K562 (cell line): ENCODE measurements at regions of chr9 and their contacts with region 1.

Region 1: DNA sequence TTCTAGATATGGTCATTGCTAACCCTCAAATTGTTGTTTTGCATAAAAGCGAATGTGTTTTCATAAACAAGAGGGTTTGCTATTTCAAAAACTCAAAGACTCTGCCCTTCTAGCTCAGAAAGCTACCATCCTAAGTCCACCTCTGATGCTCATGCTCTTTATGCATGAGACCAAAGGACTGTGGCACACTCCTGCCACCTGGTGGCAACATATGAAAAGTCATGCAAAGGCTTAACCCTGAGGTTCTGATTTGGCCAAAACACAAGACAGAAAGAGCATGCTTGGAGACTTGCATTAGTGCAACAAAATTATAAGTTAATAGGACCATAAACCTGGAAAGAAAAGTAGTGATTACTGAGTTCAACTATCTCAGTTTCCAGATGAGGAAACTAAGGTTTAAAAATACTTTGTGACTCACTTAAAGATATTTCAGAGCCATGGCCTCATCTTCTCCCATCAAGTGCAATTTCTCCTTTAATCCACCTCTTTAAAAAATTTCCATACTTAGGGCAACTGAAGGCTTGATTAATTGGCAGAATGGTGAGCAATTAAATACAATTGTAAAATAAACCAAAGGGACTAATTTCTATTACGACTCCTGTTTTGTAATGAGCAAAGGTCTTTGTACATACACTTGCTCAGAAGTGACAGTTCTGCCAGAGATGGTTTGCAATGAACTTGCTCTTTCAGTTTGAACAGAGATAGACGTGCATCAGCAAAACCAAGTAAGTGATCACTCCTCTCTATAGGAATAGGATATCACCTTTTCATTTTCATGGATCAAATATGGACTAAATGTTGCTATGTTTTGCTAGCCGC is 110.7 kb upstream of the RAD23B start:
- DNase-seq: peak; percentile 43 to 79 (median 70)
- ATAC-seq: peak; percentile 95
- H3K4me3 ChIP-seq: no peak overlapping the region
- H3K27ac ChIP-seq: no peak overlapping the region
- H3K4me1 ChIP-seq: no peaks in the 10 kb centered on the region
- H3K27me3 ChIP-seq: peaks cover 0 to 11% of the 10 kb centered on the region in 2 experiments; a peak in 2 of 5 replicates
- CTCF ChIP-seq: peak; percentile 73 to 84 (median 76)
- EP300 ChIP-seq: no peak
- POLR2A ChIP-seq: no peak
- RAD21 ChIP-seq: peak; percentile 82 to 85

Region 2: DNA sequence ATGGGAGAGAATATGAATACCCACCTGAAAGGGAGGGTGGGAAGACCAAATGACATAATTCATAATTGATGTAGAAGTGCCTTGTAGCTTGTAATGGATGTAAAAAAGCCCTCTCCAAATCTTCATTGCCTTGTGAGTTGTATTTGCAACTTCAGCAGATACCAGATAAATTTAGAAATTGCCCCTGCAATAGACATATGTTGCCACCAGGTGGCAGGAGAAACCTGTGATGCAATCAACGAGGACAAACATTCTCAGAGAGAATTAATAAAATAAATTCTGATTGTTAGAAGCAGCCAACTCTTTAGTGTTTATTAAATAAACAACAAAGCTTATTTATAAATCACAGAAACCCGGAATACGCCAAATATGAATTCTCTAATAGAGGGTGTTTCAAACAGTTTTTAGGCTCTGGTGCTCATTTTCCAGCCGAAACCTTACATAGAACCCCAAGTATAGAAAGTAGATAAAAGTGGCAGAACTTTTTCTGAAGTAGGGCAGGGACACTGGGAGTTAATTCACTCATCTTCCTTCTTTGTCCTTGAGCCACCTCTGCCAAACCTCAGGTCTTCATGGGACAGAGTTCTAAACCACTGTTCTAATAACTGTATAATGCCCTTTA is 1330.2 kb before region 1 on chr9:
- CTCF ChIA-PET with region 1: interaction called, 5 read pairs
- POLR2A ChIA-PET with region 1: no interaction called
- in situ Hi-C with region 1: no loop called
- intact Hi-C with region 1: loop called (anchors 1 kb)
- DNase-seq: peak; percentile 51 to 55 (median 51)
- ATAC-seq: peak; percentile 58; the same call in 1 of the 3 replicates
- H3K4me3 ChIP-seq: no peak overlapping the region
- H3K27ac ChIP-seq: no peak overlapping the region
- H3K4me1 ChIP-seq: no peaks in the 10 kb centered on the region
- H3K27me3 ChIP-seq: no peaks in the 10 kb centered on the region
- CTCF ChIP-seq: peak; percentile 69 to 90 (median 77)
- EP300 ChIP-seq: no peak
- POLR2A ChIP-seq: no peak
- RAD21 ChIP-seq: peak; percentile 95 to 96

Region 3: GRCh38 chr9:105881654-105882349 is 1290.6 kb before region 1 on chr9:
- CTCF ChIA-PET with region 1: no interaction called
- POLR2A ChIA-PET with region 1: no interaction called
- in situ Hi-C with region 1: loop called (anchors 25 kb)
- intact Hi-C with region 1: no loop called
- DNase-seq: peak; percentile 58 to 81 (median 62)
- ATAC-seq: peak; percentile 90
- H3K4me3 ChIP-seq: no peak overlapping the region
- H3K27ac ChIP-seq: no peak overlapping the region
- H3K4me1 ChIP-seq: peaks cover 0 to 14% of the 10 kb centered on the region in 2 experiments; a peak in 4 of 5 replicates
- H3K27me3 ChIP-seq: no peaks in the 10 kb centered on the region
- CTCF ChIP-seq: peak; percentile 78 to 93 (median 89)
- EP300 ChIP-seq: no peak
- POLR2A ChIP-seq: no peak
- RAD21 ChIP-seq: peak; percentile 80 to 92

Region 4: DNA sequence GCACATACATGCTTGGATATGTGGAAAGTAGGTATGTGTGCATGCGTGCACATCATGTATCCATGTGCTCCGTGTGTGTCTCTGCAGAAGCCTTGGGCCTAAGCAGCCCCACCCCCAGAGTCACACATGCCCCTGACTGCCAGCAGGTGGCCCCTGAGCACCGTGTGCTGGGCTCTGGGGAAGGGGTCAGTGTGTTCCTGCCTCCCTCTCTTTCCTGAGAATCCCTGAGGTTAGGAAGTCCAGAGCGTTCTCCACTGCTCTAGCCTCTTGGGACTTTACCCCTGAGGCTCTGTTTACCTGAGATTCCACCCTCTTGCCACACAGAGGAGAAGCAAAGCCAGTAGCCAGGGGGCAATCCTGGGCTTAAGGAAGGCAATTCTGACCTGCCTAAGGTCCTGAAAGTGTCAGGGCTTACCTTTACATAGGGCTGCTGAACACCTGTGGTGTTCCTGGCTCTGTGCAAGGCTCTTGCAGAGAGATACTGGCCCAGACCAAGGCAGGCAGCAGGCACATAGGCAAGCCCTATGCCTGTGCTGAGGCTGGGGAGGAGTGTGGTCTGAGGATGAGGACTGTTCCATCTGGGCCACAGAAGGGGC is 1270.8 kb before region 1 on chr9:
- CTCF ChIA-PET with region 1: no interaction called
- POLR2A ChIA-PET with region 1: no interaction called
- in situ Hi-C with region 1: loop called (anchors 25 kb)
- intact Hi-C with region 1: loop called (anchors 1 kb)
- DNase-seq: peak; percentile 40 to 66 (median 63)
- ATAC-seq: peak; percentile 99
- H3K4me3 ChIP-seq: no peak overlapping the region
- H3K27ac ChIP-seq: no peak overlapping the region
- H3K4me1 ChIP-seq: no peaks in the 10 kb centered on the region
- H3K27me3 ChIP-seq: no peaks in the 10 kb centered on the region
- CTCF ChIP-seq: peak; percentile 61 to 78 (median 74)
- EP300 ChIP-seq: no peak
- POLR2A ChIP-seq: no peak
- RAD21 ChIP-seq: peak; percentile 45 to 76; a peak in 3 of 4 replicates

Region 5: GRCh38 chr9:107127602-107128001 is 44.8 kb before region 1 on chr9:
- CTCF ChIA-PET with region 1: no interaction called
- POLR2A ChIA-PET with region 1: no interaction called
- in situ Hi-C with region 1: no loop called
- intact Hi-C with region 1: no loop called
- DNase-seq: no peak
- ATAC-seq: peak; percentile 57; the same call in 2 of the 3 replicates
- H3K4me3 ChIP-seq: no peak overlapping the region
- H3K27ac ChIP-seq: no peak overlapping the region
- H3K4me1 ChIP-seq: no peaks in the 10 kb centered on the region
- H3K27me3 ChIP-seq: peaks cover 0 to 14% of the 10 kb centered on the region in 2 experiments; a peak in 3 of 5 replicates
- CTCF ChIP-seq: 0 out of 6 replicates have a peak, but pooled peaks of 1 of the 3 experiments have one; percentile 13
- EP300 ChIP-seq: no peak
- POLR2A ChIP-seq: no peak
- RAD21 ChIP-seq: no peak; a peak in 1 of 4 replicates

Region 6: DNA sequence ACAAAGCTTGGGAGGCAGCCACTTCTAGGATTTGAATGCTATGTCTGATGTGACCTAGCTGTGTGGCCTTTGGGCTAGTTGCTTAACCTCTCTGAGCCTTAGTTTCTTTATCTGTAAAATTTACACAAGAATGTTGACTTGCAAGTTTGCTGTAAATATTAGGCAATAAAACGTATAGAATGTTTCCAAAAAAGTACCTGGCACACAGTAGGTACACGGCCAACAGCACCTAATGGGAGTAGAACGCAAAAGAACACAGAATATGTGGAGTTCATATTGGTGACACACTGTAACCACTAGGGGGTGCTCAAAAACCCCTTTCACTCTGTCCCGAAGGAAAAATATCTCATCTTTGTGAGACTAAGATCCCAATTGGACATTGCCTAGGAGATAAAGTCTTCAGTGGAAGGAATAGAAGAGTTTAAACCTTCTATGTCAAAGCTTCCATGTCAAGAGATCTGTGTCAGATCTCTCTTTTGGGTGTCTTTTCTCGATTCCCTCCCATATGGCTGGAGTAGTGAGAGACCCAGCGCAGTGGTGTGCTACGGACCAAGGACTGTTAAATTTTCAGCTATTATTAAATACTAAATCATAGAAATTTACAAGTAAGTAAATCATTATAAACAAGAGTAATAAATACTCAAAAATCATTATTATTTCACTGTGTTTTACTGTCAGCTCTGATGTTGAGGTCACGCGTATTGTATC is 34.7 kb before region 1 on chr9:
- CTCF ChIA-PET with region 1: interaction called, 5 read pairs
- POLR2A ChIA-PET with region 1: no interaction called
- in situ Hi-C with region 1: no loop called
- intact Hi-C with region 1: loop called (anchors 1 kb)
- DNase-seq: peak; percentile 37 to 72 (median 60)
- ATAC-seq: peak; percentile 89
- H3K4me3 ChIP-seq: no peak overlapping the region
- H3K27ac ChIP-seq: no peak overlapping the region
- H3K4me1 ChIP-seq: no peaks in the 10 kb centered on the region
- H3K27me3 ChIP-seq: peaks cover 0 to 14% of the 10 kb centered on the region in 2 experiments; a peak in 3 of 5 replicates
- CTCF ChIP-seq: peak; percentile 49 to 71 (median 70); a peak in 5 of 6 replicates
- EP300 ChIP-seq: no peak
- POLR2A ChIP-seq: no peak
- RAD21 ChIP-seq: peak; percentile 40 to 64; a peak in 3 of 4 replicates